ENCODE measurements at regions of chr3 and their contacts with region 1.

Region 1: GRCh38 chr3:28916713-28917499 is 364.0 kb upstream of the RBMS3 start:
- DNase-seq: peak in 1 of 2 donors; percentile 88
- H3K4me3 ChIP-seq: peak overlapping the region in 1 of 2 donors; percentile 55
- H3K27ac ChIP-seq: peak overlapping the region; percentile 72 to 79
- H3K4me1 ChIP-seq: peaks cover 0 to 8% of the 10 kb centered on the region in 2 donors
- H3K27me3 ChIP-seq: no peaks in the 10 kb centered on the region
- CTCF ChIP-seq: peak; percentile 54 to 66 (median 65)

Region 2: GRCh38 chr3:29065211-29065785 is 148.4 kb after region 1 on chr3:
- intact Hi-C with region 1: loop called (anchors 5 kb)
- DNase-seq: peak; percentile 62 to 97
- H3K4me3 ChIP-seq: no peak overlapping the region
- H3K27ac ChIP-seq: peak overlapping the region; percentile 55 to 66
- H3K4me1 ChIP-seq: peaks cover 0 to 10% of the 10 kb centered on the region in 2 donors
- H3K27me3 ChIP-seq: no peaks in the 10 kb centered on the region
- CTCF ChIP-seq: no peak

Region 3: DNA sequence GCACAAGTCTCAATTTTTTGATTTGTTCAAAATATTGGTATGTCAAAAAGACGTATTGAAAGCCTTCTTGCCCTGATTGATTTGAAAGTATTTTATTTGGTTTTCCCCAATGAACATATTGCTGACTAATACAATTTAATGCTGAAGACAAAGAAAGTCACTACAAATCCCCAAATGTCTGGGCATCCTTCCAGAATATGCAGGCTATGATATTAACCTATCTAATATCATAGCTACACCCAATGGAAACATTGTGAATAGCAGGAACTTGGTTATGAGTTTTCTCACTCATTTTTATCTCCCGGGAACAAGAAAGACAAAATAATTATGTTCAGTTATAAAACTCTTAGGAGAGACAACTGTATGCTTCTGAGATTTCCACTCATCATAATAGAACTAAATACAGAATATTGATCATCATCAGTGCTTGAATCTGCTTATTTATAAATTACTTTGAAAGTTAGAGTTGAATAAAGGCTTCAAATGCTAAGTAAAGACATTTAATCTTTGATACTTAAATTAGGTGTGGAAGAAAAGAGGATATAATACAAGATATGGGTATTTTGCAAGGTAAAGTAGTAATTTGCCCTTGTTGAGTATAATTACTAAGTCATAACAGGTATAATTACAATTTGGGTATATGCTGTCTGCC is 847.8 kb after region 1 on chr3:
- intact Hi-C with region 1: loop called (anchors 2 kb)
- DNase-seq: no peak
- H3K4me3 ChIP-seq: no peak overlapping the region
- H3K27ac ChIP-seq: no peak overlapping the region
- H3K4me1 ChIP-seq: peaks cover 0 to 20% of the 10 kb centered on the region in 2 donors
- H3K27me3 ChIP-seq: no peaks in the 10 kb centered on the region
- CTCF ChIP-seq: peak; percentile 51 to 65 (median 53)

Measured in ascending aorta (tissue), 2 donors.